Activated T-helper 2 cell treated with anti-CD3 and anti-CD28 coated beads, Interferon-gamma antibody, Interleukin-2, Interleukin-4, amounts not matched to agents 10 μg/mL and 5 μg/mL and 100 μg/mL, durations not matched to agents 14 hours and 24 hours and 36 hours (primary cell): ENCODE measurements at regions of chr7 and their contacts with region 1.

Region 1: DNA sequence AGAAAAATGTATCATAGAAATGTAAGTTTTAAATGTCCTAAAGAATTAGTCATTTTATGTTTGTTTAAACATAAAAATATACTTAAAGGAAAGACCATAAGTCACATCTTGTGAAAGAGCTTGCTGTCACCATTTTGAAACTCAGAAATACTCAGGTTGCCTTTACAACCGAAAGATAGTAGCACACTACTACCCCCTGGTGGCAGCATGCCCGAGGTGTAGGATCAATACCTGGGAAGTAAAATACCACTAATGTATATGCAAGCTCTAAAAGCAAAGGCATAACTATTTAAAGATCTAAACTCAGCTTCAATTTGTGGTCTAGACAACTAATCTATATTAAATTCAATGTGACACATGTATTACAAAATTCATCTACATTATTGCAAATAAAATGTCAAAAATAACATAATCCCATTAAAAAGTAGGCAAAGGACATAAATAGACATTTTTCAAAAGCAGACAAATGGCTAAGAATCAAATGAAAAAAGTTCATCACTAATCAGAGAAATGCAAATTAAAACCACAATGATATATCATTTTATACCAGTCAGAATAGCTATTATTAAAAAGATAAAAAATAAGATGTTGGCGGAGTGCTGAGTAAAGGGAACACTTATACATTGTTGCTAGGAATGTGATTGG is 47.7 kb upstream of the FGL2 start:
- DNase-seq: peak; percentile 73
- H3K4me3 Mint-ChIP-seq: no peak overlapping the region
- H3K27ac Mint-ChIP-seq: no peak overlapping the region
- H3K4me1 Mint-ChIP-seq: peaks cover 12% of the 10 kb centered on the region
- H3K27me3 Mint-ChIP-seq: peaks cover 14% of the 10 kb centered on the region

Region 2: DNA sequence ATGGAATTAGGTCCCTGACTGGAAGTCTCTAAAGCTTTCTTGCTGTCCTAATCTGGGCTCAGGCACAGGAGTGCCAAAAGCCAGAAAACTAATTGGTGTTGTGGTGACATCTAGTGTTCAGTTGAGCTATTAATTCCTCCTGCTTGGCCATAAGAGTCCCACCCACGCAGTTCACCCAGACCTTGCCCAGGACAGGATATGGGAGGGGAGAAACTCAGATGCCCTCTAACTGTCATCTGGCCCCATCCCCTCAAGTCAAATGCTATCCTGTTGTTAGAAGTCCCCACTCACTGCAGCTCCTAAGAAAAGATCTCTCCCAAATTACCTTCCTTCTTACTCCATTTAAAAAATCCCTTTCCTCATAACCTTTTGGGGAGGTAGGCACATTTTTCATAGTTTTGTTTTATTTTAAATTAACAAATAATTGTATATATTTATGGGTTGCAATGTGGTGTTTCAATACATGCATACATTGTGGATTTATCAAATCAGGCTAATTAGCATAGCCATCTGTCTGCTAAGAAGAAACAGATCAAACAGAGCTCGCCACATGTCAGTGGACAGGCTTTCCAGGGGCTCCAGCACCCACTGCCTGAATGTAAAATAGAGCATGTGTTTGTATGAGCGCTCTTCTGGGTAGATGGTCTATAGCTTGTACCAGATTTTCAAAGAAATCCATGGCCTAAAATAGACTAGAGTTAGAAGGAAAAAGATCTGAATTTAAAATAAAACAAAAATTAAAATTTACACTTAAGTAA is 84.8 kb after region 1 on chr7:
- intact Hi-C with region 1: loop called (anchors 2 kb)
- DNase-seq: peak; percentile 31
- H3K4me3 Mint-ChIP-seq: no peak overlapping the region
- H3K27ac Mint-ChIP-seq: no peak overlapping the region
- H3K4me1 Mint-ChIP-seq: peaks cover 38% of the 10 kb centered on the region
- H3K27me3 Mint-ChIP-seq: no peaks in the 10 kb centered on the region